Right ventricle myocardium inferior (tissue), 1 donor: ENCODE measurements at regions of chr6 and their contacts with region 1.

Region 1: DNA sequence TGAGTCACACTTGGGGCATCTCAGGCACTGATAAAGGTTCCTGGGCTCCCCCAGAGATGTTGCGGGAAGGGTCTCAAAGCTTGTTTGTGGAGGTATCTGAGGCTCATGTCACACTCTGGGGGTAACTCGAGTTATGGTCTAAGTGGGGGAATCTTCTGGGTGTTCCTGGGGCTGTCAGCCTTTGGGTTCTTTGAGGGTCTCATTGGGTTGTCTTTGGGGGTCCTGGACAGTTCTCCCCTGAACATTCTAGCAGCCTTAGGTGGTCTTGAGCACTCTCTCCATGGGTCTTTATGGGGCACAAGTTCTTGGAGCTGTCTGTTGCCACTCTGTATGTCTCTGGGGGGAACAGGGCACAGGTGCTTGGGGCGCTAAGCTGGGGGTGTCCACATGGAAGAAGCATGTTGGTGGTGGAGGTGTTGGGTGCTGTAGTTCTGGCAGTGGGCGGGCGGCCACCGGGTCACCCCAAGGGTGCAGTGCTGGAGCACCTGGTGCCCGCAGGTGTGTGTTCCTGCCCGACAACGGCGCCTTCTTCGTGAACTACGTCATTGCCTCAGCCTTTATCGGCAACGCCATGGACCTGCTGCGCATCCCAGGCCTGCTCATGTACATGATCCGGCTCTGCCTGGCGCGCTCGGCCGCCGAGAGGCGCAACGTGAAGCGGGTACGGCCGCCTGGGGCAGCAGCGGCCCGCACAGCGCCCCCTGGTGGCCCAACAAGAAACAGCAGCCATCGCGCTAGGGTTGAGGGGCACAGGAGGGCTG is 7.1 kb upstream of the CAPN11 start:
- DNase-seq: peak; percentile 91
- ATAC-seq: peak; percentile 73

Region 2: DNA sequence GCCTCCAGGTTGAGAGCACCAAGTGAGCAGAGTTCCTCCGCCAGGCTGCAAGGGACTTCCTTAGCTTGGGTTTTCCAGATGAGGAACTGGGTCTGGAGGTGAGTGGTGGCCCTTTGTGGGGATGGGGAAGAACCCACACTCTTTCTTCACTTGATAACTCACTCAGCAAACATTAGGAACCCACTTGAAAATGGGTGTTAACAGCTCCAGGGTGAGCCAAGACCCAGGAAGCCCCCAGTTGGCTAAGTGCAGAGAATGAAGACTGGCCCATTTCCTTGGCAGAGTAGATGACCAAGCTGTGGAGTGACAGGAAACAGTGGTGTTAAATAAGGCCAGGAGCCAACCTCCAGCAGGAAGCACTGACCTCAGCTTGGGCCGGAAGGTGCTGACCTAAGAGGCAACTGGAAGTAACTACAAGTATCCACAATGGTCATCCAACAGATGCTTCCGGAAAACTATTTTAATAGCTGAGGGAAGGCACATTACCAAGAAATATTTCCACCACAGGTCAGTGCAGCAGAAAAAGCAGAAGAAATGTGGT is 47.0 kb before region 1 on chr6:
- intact Hi-C with region 1: no loop called
- DNase-seq: no peak
- ATAC-seq: peak; percentile 54

Region 3: GRCh38 chr6:44127186-44128019 is 24.1 kb before region 1 on chr6 and contains the starts of genes MRPL14 and TMEM63B:
- intact Hi-C with region 1: loop called (anchors 2 kb)
- DNase-seq: peak; percentile 95
- ATAC-seq: peak; percentile 97
- total RNA-seq, gene MRPL14: 41.7 TPM
- total RNA-seq, gene TMEM63B: 44.5 TPM

Region 4: GRCh38 chr6:44353336-44353735 is 201.8 kb after region 1 on chr6:
- intact Hi-C with region 1: no loop called
- DNase-seq: no peak
- ATAC-seq: no peak